Mammary epithelial cell (primary cell): ENCODE measurements at regions of chr2 and their contacts with region 1.

Region 1: GRCh38 chr2:176772816-176773215 is 439.8 kb upstream of the HNRNPA3 start:
- DNase-seq: no peak
- H3K4me3 ChIP-seq: no peak overlapping the region
- H3K27ac ChIP-seq: no peak overlapping the region
- H3K4me1 ChIP-seq: no peaks in the 10 kb centered on the region
- H3K27me3 ChIP-seq: peaks cover 3% of the 10 kb centered on the region
- CTCF ChIP-seq: no peak

Region 2: GRCh38 chr2:177641331-177641730 is 868.5 kb after region 1 on chr2:
- CTCF ChIA-PET with region 1: interaction called, 11 read pairs
- dilution Hi-C with region 1: no loop called
- in situ Hi-C with region 1: no loop called
- intact Hi-C with region 1: no loop called
- DNase-seq: no peak
- H3K4me3 ChIP-seq: no peak overlapping the region
- H3K27ac ChIP-seq: no peak overlapping the region
- H3K4me1 ChIP-seq: no peaks in the 10 kb centered on the region
- H3K27me3 ChIP-seq: no peaks in the 10 kb centered on the region
- CTCF ChIP-seq: no peak